ENCODE measurements at regions of chr7 and their contacts with region 1.

Region 1: DNA sequence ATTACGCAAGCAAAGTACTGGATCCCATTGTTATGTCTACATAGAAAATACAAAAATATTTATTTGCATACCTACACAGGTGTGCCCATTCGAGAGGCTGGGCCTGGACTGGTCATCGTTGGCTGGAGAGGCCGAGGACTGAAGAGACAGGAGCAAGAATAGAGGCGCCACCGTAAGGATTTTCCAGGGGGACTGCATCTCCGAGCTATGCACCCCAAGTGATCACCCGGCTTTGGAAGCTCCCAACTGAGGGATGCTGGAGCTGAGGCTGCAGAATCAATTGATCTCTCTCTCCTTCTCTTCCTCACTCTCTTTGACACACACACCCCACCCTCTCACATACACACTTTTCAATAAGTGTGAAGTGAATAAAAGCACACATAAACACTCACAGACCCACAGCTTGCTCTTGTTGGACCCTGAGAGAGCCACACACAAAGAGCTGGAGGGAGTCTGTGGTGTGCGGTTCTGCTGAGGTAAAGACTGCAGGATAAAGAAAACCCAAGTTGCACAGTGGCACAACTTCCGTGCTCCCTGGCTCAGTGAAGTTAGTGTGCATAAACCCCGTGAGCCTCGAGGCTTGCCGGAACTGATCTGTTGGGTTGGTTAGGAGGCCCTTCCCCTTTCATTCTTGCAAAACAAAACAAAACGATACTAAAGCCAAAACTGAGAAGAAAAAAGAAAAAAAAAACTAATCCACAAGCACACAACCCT is at the start of gene AOAH:
- DNase-seq: peak; percentile 72 to 93
- ATAC-seq: peak; percentile 74 to 92 (median 89)
- H3K4me3 ChIP-seq: peak within 1 kb of the TSS; percentile 78
- H3K4me3 Mint-ChIP-seq: peak within 1 kb of the TSS; percentile 91
- H3K27ac ChIP-seq: peak within 1 kb of the TSS; percentile 75
- H3K27ac Mint-ChIP-seq: peak within 1 kb of the TSS; percentile 90
- H3K4me1 ChIP-seq: peaks cover 57% of the 10 kb centered on the region
- H3K4me1 Mint-ChIP-seq: peaks cover 84 to 88% of the 10 kb centered on the region in 2 donors
- H3K27me3 ChIP-seq: no peaks in the 10 kb centered on the region
- H3K27me3 Mint-ChIP-seq: no peaks in the 10 kb centered on the region
- CTCF ChIP-seq: no peak
- total RNA-seq, gene AOAH: 263 to 403 (median 312) TPM

Region 2: DNA sequence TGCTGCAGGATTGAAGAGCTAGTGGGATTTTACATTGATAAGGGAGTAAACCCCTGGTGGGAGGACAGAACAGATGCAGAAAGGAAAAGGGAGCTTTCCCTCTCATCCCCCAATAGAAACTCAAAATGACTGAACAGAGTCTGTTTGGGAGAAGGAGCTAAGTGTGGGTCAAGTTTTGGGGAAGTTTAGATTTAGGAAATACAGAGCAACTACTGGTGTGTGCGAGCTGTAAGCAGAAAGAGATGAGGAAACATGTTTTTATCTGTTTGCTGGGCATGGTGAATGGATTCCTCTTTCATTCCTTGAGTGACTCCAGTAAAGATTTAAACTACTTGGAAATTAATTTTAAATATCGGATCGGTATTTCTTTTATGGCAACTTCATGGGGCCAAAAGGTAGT is 132.5 kb before region 1 on chr7:
- intact Hi-C with region 1: no loop called
- DNase-seq: no peak
- ATAC-seq: peak in 1 of 3 donors; percentile 50
- H3K4me3 ChIP-seq: no peak overlapping the region
- H3K4me3 Mint-ChIP-seq: no peak overlapping the region
- H3K27ac ChIP-seq: no peak overlapping the region
- H3K27ac Mint-ChIP-seq: peak overlapping the region; percentile 72 to 78
- H3K4me1 ChIP-seq: no peaks in the 10 kb centered on the region
- H3K4me1 Mint-ChIP-seq: peaks cover 26 to 31% of the 10 kb centered on the region in 2 donors
- H3K27me3 ChIP-seq: no peaks in the 10 kb centered on the region
- H3K27me3 Mint-ChIP-seq: no peaks in the 10 kb centered on the region
- CTCF ChIP-seq: no peak

Region 3: GRCh38 chr7:36625247-36625646 is 98.9 kb before region 1 on chr7:
- intact Hi-C with region 1: loop called (anchors 5 kb)
- DNase-seq: no peak
- ATAC-seq: no peak
- H3K4me3 ChIP-seq: no peak overlapping the region
- H3K4me3 Mint-ChIP-seq: no peak overlapping the region
- H3K27ac ChIP-seq: peak overlapping the region; percentile 10
- H3K27ac Mint-ChIP-seq: peak overlapping the region; percentile 77 to 79
- H3K4me1 ChIP-seq: peaks cover 16% of the 10 kb centered on the region
- H3K4me1 Mint-ChIP-seq: peaks cover 69 to 70% of the 10 kb centered on the region in 2 donors
- H3K27me3 ChIP-seq: no peaks in the 10 kb centered on the region
- H3K27me3 Mint-ChIP-seq: no peaks in the 10 kb centered on the region
- CTCF ChIP-seq: no peak

Region 4: GRCh38 chr7:36686499-36686898 is 37.6 kb before region 1 on chr7:
- intact Hi-C with region 1: loop called (anchors 5 kb)
- DNase-seq: peak; percentile 49 to 58
- ATAC-seq: peak; percentile 84 to 89 (median 89)
- H3K4me3 ChIP-seq: no peak overlapping the region
- H3K4me3 Mint-ChIP-seq: peak overlapping the region; percentile 79
- H3K27ac ChIP-seq: peak overlapping the region; percentile 32
- H3K27ac Mint-ChIP-seq: peak overlapping the region; percentile 88 to 92
- H3K4me1 ChIP-seq: peaks cover 44% of the 10 kb centered on the region
- H3K4me1 Mint-ChIP-seq: peaks cover 77 to 86% of the 10 kb centered on the region in 2 donors
- H3K27me3 ChIP-seq: no peaks in the 10 kb centered on the region
- H3K27me3 Mint-ChIP-seq: no peaks in the 10 kb centered on the region
- CTCF ChIP-seq: no peak

Region 5: DNA sequence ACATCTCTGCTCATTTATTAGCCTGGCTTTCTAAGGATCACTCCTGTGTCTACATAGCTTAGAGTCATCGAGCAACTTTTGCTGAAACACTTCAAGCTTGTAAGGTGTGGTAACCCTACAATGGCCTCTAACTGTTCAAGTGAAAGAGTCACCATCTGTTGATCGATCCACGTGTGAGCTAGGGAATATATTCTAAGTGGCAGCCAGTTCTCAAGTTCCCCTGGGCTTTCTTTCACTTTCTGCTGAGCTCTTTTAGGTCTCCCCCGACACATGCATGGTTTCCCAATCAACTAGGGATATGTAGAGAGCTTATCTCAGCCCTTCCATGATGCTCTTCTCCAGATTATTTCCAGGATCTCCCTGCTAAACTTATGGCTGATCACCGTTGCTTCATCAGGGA is 15.3 kb before region 1 on chr7:
- intact Hi-C with region 1: loop called (anchors 2 kb)
- DNase-seq: peak in 1 of 2 donors; percentile 37
- ATAC-seq: peak; percentile 54 to 63 (median 61)
- H3K4me3 ChIP-seq: no peak overlapping the region
- H3K4me3 Mint-ChIP-seq: peak overlapping the region; percentile 81
- H3K27ac ChIP-seq: peak overlapping the region; percentile 41
- H3K27ac Mint-ChIP-seq: peak overlapping the region; percentile 91 to 97
- H3K4me1 ChIP-seq: peaks cover 22% of the 10 kb centered on the region
- H3K4me1 Mint-ChIP-seq: peaks cover 97 to 99% of the 10 kb centered on the region in 2 donors
- H3K27me3 ChIP-seq: no peaks in the 10 kb centered on the region
- H3K27me3 Mint-ChIP-seq: no peaks in the 10 kb centered on the region
- CTCF ChIP-seq: no peak

Region 6: DNA sequence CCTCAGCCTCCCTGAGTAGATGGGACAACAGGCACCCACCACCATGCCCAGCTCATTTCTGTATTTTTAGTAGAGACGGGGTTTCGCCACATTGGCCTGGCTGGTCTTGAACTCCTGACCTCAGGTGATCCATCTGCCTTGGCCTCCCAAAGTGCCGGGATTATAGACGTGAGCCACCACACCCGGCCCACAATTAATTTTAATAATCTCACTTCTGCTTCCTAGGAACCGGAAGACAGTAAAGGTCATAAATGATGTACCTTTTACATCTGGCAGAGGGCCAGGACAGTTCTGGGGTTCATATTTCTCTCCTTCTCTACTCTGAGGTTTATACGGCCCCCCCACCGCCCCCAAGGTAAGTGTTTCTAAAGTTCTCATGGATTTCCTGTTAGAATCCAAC is 31.4 kb after region 1 on chr7:
- intact Hi-C with region 1: no loop called
- DNase-seq: no peak
- ATAC-seq: no peak
- H3K4me3 ChIP-seq: no peak overlapping the region
- H3K4me3 Mint-ChIP-seq: no peak overlapping the region
- H3K27ac ChIP-seq: no peak overlapping the region
- H3K27ac Mint-ChIP-seq: peak overlapping the region in 1 of 2 donors; percentile 22
- H3K4me1 ChIP-seq: no peaks in the 10 kb centered on the region
- H3K4me1 Mint-ChIP-seq: peaks cover 0 to 11% of the 10 kb centered on the region in 2 donors
- H3K27me3 ChIP-seq: no peaks in the 10 kb centered on the region
- H3K27me3 Mint-ChIP-seq: no peaks in the 10 kb centered on the region
- CTCF ChIP-seq: no peak

Region 7: GRCh38 chr7:36777062-36777461 is 53.0 kb after region 1 on chr7:
- intact Hi-C with region 1: loop called (anchors 2 kb)
- DNase-seq: peak in 1 of 2 donors; percentile 88
- ATAC-seq: peak; percentile 53 to 72 (median 63)
- H3K4me3 ChIP-seq: peak overlapping the region; percentile 21
- H3K4me3 Mint-ChIP-seq: peak overlapping the region; percentile 91
- H3K27ac ChIP-seq: peak overlapping the region; percentile 91
- H3K27ac Mint-ChIP-seq: peak overlapping the region; percentile 94 to 96
- H3K4me1 ChIP-seq: peaks cover 53% of the 10 kb centered on the region
- H3K4me1 Mint-ChIP-seq: peaks cover 76 to 85% of the 10 kb centered on the region in 2 donors
- H3K27me3 ChIP-seq: no peaks in the 10 kb centered on the region
- H3K27me3 Mint-ChIP-seq: no peaks in the 10 kb centered on the region
- CTCF ChIP-seq: no peak

Measured in natural killer cell (primary cell).